MCF 10A (cell line): ENCODE measurements at regions of chr12 and their contacts with region 1.

Region 1: DNA sequence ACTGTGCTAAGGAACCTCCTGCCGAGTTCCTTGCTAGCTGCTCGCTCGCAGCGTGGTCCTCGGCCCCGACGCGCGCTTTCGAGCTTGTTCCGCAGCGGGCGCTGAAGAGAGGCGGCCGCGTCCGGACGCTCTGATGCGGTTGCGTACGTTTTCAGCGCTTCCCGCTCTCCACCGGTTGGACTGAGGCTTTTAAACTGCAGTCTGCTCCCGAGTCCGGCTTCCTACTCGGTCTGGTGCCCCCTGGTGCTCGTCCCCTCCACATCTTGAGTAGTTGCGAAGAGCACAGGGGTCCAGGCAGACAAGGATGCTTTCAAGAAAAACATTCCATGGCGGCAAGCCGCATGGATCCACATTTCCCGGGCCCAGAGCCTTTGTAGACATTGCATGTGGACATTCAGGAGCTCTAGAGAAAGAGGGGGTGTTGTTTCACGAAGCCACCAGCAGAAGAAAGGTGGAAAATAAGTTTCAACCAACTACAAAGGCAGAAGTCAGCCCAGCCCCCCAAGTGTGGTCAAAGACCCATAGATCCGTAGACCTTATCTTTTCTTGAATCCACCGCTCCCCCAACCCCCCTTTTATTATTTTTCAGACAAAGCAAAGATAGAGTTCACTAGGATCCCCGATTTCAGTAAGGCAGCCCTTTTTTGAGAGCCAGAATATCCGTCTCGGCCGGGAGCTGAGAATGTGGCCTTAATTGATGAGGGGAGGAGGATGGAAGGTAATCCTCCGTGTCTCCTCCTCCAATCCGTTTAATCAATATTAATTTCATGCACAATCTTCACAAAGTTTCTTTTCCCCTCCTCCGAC is 984 bp upstream of the WNK1 start:
- DNase-seq: peak; percentile 95
- H3K4me3 Mint-ChIP-seq: no peak overlapping the region
- H3K27ac Mint-ChIP-seq: no peak overlapping the region
- H3K4me1 Mint-ChIP-seq: peaks cover 11% of the 10 kb centered on the region
- H3K27me3 Mint-ChIP-seq: no peaks in the 10 kb centered on the region
- CTCF ChIP-seq: peak; percentile 49

Region 2: DNA sequence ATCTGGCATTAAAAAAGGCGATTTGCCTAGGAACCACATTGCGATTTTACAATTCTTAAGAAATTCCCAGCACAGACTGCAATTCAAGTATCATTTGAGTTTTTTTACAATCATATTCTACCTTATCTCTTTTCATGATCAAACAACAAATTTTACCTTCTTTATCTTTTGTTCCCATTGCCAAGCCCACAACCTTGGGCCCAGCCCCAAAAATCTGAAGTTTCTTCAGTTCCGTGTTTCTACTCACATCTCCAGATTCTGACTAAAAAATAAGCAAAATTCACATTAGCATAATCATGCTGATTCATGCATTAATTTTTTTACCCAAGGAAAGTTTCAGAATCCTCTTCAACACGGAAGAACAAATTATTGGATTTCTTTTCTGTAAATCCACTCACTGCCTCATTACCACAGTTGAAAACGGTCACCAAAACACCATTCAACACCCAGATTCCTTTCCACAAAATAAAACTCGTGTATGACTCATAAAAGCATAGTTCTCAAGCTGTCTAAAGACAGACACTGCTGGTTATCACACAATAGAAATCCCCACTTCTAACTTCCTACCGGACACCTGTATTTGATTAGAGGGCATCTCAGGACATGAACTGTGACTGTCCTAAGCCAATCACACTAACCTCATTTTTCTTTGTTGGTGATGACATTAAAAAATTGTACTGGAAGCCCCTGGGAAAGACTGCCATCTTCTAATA is 395.0 kb before region 1 on chr12:
- CTCF ChIA-PET with region 1: no interaction called
- POLR2A ChIA-PET with region 1: no interaction called
- intact Hi-C with region 1: no loop called
- DNase-seq: peak; percentile 12
- H3K4me3 Mint-ChIP-seq: no peak overlapping the region
- H3K27ac Mint-ChIP-seq: no peak overlapping the region
- H3K4me1 Mint-ChIP-seq: peaks cover 15% of the 10 kb centered on the region
- H3K27me3 Mint-ChIP-seq: no peaks in the 10 kb centered on the region
- CTCF ChIP-seq: no peak

Region 3: GRCh38 chr12:597926-598568 is 153.3 kb before region 1 on chr12:
- CTCF ChIA-PET with region 1: interaction called, 34 read pairs
- POLR2A ChIA-PET with region 1: interaction called, 72 read pairs
- intact Hi-C with region 1: no loop called
- DNase-seq: peak; percentile 92
- H3K4me3 Mint-ChIP-seq: peak overlapping the region; percentile 15
- H3K27ac Mint-ChIP-seq: peak overlapping the region; percentile 18
- H3K4me1 Mint-ChIP-seq: peaks cover 20% of the 10 kb centered on the region
- H3K27me3 Mint-ChIP-seq: no peaks in the 10 kb centered on the region
- CTCF ChIP-seq: no peak

Region 4: GRCh38 chr12:724194-724855 is 27.1 kb before region 1 on chr12:
- CTCF ChIA-PET with region 1: interaction called, 36 read pairs
- POLR2A ChIA-PET with region 1: interaction called, 19 read pairs
- intact Hi-C with region 1: no loop called
- DNase-seq: peak; percentile 68
- H3K4me3 Mint-ChIP-seq: no peak overlapping the region
- H3K27ac Mint-ChIP-seq: peak overlapping the region; percentile 74
- H3K4me1 Mint-ChIP-seq: peaks cover 30% of the 10 kb centered on the region
- H3K27me3 Mint-ChIP-seq: no peaks in the 10 kb centered on the region
- CTCF ChIP-seq: no peak

Region 5: GRCh38 chr12:779745-780734 is 28.6 kb after region 1 on chr12:
- CTCF ChIA-PET with region 1: interaction called, 42 read pairs
- POLR2A ChIA-PET with region 1: interaction called, 82 read pairs
- intact Hi-C with region 1: no loop called
- DNase-seq: peak; percentile 56
- H3K4me3 Mint-ChIP-seq: peak overlapping the region; percentile 62
- H3K27ac Mint-ChIP-seq: peak overlapping the region; percentile 63
- H3K4me1 Mint-ChIP-seq: peaks cover 19% of the 10 kb centered on the region
- H3K27me3 Mint-ChIP-seq: no peaks in the 10 kb centered on the region
- CTCF ChIP-seq: no peak

Region 6: GRCh38 chr12:818733-819132 is 67.3 kb after region 1 on chr12:
- CTCF ChIA-PET with region 1: interaction called, 35 read pairs
- POLR2A ChIA-PET with region 1: interaction called, 86 read pairs
- intact Hi-C with region 1: loop called (anchors 1 kb)
- DNase-seq: peak; percentile 16
- H3K4me3 Mint-ChIP-seq: no peak overlapping the region
- H3K27ac Mint-ChIP-seq: peak overlapping the region; percentile 83
- H3K4me1 Mint-ChIP-seq: peaks cover 28% of the 10 kb centered on the region
- H3K27me3 Mint-ChIP-seq: no peaks in the 10 kb centered on the region
- CTCF ChIP-seq: no peak

Region 7: GRCh38 chr12:1077036-1077803 is 325.8 kb after region 1 on chr12:
- CTCF ChIA-PET with region 1: no interaction called
- POLR2A ChIA-PET with region 1: no interaction called
- intact Hi-C with region 1: no loop called
- DNase-seq: no peak
- H3K4me3 Mint-ChIP-seq: no peak overlapping the region
- H3K27ac Mint-ChIP-seq: no peak overlapping the region
- H3K4me1 Mint-ChIP-seq: no peaks in the 10 kb centered on the region
- H3K27me3 Mint-ChIP-seq: no peaks in the 10 kb centered on the region
- CTCF ChIP-seq: no peak

Region 8: DNA sequence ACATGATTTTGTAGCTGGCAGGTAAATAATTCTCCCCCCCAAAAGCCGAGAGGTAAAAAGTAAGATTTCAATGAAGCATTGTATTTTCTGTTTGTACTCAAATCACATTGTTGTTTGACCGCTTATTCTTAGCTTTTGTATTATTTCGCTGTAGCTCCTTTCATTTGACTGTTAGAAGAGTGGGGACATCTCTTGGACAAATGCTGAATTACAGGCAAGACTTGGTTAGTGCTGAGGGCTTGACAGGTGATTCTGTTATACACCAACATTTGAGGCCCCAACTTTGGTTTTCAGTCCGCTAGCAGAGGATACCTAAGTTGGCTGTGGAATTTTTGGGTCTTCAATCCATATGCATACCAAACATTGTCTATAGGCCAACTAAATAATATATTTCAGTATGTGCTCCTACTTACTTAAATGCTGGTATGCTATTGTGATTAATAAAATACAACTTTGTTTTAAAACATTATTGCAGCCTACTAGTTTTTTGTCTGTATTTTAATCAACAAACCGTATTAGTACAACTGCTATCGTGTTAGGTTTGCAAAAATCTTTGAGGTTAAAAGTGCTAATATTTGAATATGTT is 341.9 kb after region 1 on chr12:
- CTCF ChIA-PET with region 1: no interaction called
- POLR2A ChIA-PET with region 1: no interaction called
- intact Hi-C with region 1: loop called (anchors 10 kb)
- DNase-seq: peak; percentile 75
- H3K4me3 Mint-ChIP-seq: no peak overlapping the region
- H3K27ac Mint-ChIP-seq: no peak overlapping the region
- H3K4me1 Mint-ChIP-seq: peaks cover 10% of the 10 kb centered on the region
- H3K27me3 Mint-ChIP-seq: no peaks in the 10 kb centered on the region
- CTCF ChIP-seq: peak; percentile 75

Region 9: GRCh38 chr12:1157046-1157445 is 405.7 kb after region 1 on chr12:
- CTCF ChIA-PET with region 1: no interaction called
- POLR2A ChIA-PET with region 1: no interaction called
- intact Hi-C with region 1: no loop called
- DNase-seq: no peak
- H3K4me3 Mint-ChIP-seq: no peak overlapping the region
- H3K27ac Mint-ChIP-seq: no peak overlapping the region
- H3K4me1 Mint-ChIP-seq: no peaks in the 10 kb centered on the region
- H3K27me3 Mint-ChIP-seq: no peaks in the 10 kb centered on the region
- CTCF ChIP-seq: no peak

Region 10: GRCh38 chr12:1812650-1813302 is 1061.4 kb after region 1 on chr12:
- CTCF ChIA-PET with region 1: no interaction called
- POLR2A ChIA-PET with region 1: no interaction called
- intact Hi-C with region 1: no loop called
- DNase-seq: peak; percentile 80
- H3K4me3 Mint-ChIP-seq: no peak overlapping the region
- H3K27ac Mint-ChIP-seq: peak overlapping the region; percentile 63
- H3K4me1 Mint-ChIP-seq: peaks cover 5% of the 10 kb centered on the region
- H3K27me3 Mint-ChIP-seq: peaks cover 22% of the 10 kb centered on the region
- CTCF ChIP-seq: no peak